Posterior vena cava (tissue), 2 donors: ENCODE measurements at regions of chr7 and their contacts with region 1.

Region 1: DNA sequence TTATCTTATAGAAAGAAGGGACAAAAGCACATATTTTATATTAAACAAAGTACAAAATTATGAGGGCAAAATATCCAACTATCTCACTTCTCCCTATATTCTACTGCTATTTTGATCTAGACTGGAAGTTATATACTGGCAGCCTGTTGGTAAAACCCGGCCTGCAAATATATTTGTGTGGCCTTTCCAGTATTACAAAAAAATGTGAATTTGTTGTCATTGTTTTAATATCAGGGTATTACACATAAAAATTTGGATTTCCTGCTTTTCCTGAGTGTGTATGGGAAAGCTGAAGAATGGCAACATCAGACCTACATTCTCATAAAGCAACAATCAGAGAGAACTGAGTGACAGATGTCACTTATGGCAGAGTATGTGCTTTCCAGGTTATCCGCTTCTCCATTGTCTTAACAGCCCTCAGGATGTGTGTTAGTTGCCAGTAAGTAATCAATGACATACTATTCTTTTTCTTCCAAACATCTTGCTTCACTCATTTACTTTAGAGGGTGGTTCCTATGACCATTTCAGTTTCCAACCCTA is 7.3 kb downstream of the SYPL1 start:
- DNase-seq: no peak

Region 2: GRCh38 chr7:105906695-105907094 is 198.1 kb before region 1 on chr7:
- intact Hi-C with region 1: no loop called
- DNase-seq: no peak

Region 3: GRCh38 chr7:106082087-106082854 is 22.5 kb before region 1 on chr7:
- intact Hi-C with region 1: loop called in 1 of 2 experiments (anchors 1 kb)
- DNase-seq: no peak

Region 4: GRCh38 chr7:106176414-106177299 is 71.9 kb after region 1 on chr7:
- intact Hi-C with region 1: no loop called
- DNase-seq: peak; percentile 95